ENCODE measurements at regions of chr1 and their contacts with region 1.

Region 1: GRCh38 chr1:39470040-39470439 is 21.4 kb upstream of the BMP8A start:
- DNase-seq: no peak
- ATAC-seq: no peak
- H3K4me3 Mint-ChIP-seq: no peak overlapping the region
- H3K27ac Mint-ChIP-seq: no peak overlapping the region
- H3K4me1 Mint-ChIP-seq: no peaks in the 10 kb centered on the region
- H3K27me3 Mint-ChIP-seq: no peaks in the 10 kb centered on the region
- CTCF ChIP-seq: no peak

Region 2: GRCh38 chr1:39282537-39283216 is 187.4 kb before region 1 on chr1:
- CTCF ChIA-PET with region 1: no interaction called
- POLR2A ChIA-PET with region 1: no interaction called
- intact Hi-C with region 1: no loop called
- DNase-seq: no peak
- ATAC-seq: no peak
- H3K4me3 Mint-ChIP-seq: no peak overlapping the region
- H3K27ac Mint-ChIP-seq: no peak overlapping the region
- H3K4me1 Mint-ChIP-seq: peaks cover 17% of the 10 kb centered on the region
- H3K27me3 Mint-ChIP-seq: no peaks in the 10 kb centered on the region
- CTCF ChIP-seq: no peak

Region 3: GRCh38 chr1:39525366-39526165 is 55.5 kb after region 1 on chr1:
- CTCF ChIA-PET with region 1: no interaction called
- POLR2A ChIA-PET with region 1: no interaction called
- intact Hi-C with region 1: no loop called
- DNase-seq: peak; percentile 73
- ATAC-seq: peak; percentile 99
- H3K4me3 Mint-ChIP-seq: peak overlapping the region; percentile 64
- H3K27ac Mint-ChIP-seq: peak overlapping the region; percentile 81
- H3K4me1 Mint-ChIP-seq: peaks cover 32% of the 10 kb centered on the region
- H3K27me3 Mint-ChIP-seq: no peaks in the 10 kb centered on the region
- CTCF ChIP-seq: no peak

Region 4: GRCh38 chr1:39538588-39539465 is 68.8 kb after region 1 on chr1:
- CTCF ChIA-PET with region 1: interaction called, 9 read pairs
- POLR2A ChIA-PET with region 1: no interaction called
- intact Hi-C with region 1: loop called (anchors 2 kb)
- DNase-seq: peak; percentile 38
- ATAC-seq: peak; percentile 80
- H3K4me3 Mint-ChIP-seq: no peak overlapping the region
- H3K27ac Mint-ChIP-seq: no peak overlapping the region
- H3K4me1 Mint-ChIP-seq: peaks cover 17% of the 10 kb centered on the region
- H3K27me3 Mint-ChIP-seq: no peaks in the 10 kb centered on the region
- CTCF ChIP-seq: no peak

Region 5: DNA sequence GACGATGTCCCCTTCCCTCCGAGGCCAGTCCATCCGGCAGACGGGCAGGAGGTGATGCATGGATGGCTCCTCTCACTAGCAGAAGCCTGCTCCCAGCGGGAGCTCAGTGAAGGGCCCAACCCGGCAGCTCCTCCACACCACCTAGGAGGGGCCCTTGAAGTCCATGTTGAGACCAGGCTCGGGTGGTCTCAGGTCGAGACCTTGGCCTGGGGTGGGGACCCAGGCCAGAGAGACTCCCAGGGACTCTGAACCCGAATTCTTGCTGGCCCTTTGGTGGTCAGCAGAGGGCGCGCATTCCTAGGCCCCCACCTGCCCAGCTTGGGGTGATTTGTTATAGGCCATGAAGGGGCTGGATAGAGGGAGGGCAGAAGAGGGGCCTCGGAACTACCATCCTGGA is 202.5 kb after region 1 on chr1:
- CTCF ChIA-PET with region 1: no interaction called
- POLR2A ChIA-PET with region 1: no interaction called
- intact Hi-C with region 1: no loop called
- DNase-seq: no peak
- ATAC-seq: peak; percentile 34
- H3K4me3 Mint-ChIP-seq: peak overlapping the region; percentile 41
- H3K27ac Mint-ChIP-seq: no peak overlapping the region
- H3K4me1 Mint-ChIP-seq: peaks cover 7% of the 10 kb centered on the region
- H3K27me3 Mint-ChIP-seq: peaks cover 35% of the 10 kb centered on the region
- CTCF ChIP-seq: no peak

Measured in activated B cell treated with CpG ODN at 0.5 μM for 24 hours (primary cell).